Activated CD4-positive, alpha-beta memory T cell treated with anti-CD3 and anti-CD28 coated beads, Interleukin-2, amount 10 ng/mL, durations not matched to agents 7 days and 5 days (primary cell): ENCODE measurements at regions of chr15 and their contacts with region 1.

Region 1: DNA sequence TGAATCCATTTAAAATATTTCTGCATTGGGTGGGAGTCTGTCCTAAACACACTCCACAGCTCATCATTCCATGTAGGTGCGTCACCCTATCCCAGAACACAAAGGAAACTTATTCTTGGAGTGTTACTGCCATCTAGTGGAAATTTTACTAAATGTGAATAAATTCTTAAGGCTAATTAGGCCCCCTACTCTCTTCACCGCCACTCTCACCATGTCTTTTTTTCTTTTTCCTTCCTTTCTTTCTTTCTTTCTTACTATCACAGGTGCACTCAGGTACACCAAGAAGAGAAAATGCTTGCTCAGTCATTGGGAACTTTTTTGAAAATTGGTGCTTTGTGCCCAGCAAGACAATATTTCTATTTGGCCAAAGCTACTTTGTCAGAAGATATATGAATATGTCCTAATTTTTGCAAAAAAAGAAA is 26.4 kb upstream of the ATP8B4 start:
- DNase-seq: no peak
- H3K4me3 Mint-ChIP-seq: no peak overlapping the region
- H3K27ac Mint-ChIP-seq: no peak overlapping the region
- H3K4me1 Mint-ChIP-seq: peaks cover 29% of the 10 kb centered on the region
- H3K27me3 Mint-ChIP-seq: no peaks in the 10 kb centered on the region

Region 2: DNA sequence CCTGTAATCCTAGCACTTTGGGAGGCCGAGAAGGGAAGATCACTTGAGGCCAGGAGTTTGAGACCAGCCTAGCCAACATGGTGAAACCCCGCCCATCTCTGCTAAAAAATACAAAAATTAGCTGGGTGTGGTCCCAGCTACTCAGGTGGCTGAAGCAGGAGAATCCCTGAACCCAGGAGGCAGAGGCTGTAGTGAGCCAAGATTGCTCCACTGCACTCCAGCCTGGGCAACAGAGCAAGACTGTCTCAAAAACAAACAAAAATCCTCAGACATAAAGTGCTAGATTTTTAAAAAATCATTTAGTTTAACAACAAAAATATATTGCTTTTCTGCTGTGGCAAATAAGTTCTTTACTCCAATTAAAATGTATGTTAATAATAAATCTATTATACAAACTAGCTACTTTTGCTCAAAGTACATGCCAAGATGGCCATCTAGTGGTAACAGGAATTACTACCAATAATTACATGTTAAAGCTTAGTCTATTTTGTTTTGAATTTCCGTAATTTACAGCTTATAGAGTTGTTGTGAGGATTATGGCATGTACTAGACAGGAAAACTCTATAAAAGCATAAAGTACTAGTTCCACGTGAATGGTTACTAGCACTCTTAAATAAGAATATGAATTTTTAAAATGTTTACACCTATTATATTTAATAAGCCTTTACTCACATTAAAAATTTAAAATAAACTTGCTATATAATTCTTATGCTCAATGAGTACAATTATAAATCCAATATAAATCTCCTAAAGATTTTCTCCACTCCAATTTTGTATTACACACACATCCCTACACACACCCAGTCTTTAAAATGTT is 170.6 kb after region 1 on chr15:
- CTCF ChIA-PET with region 1: interaction called, 10 read pairs
- POLR2A ChIA-PET with region 1: no interaction called
- DNase-seq: no peak
- H3K4me3 Mint-ChIP-seq: no peak overlapping the region
- H3K27ac Mint-ChIP-seq: no peak overlapping the region
- H3K4me1 Mint-ChIP-seq: peaks cover 29% of the 10 kb centered on the region
- H3K27me3 Mint-ChIP-seq: no peaks in the 10 kb centered on the region